Ascending aorta (tissue), 2 donors: ENCODE measurements at regions of chr1 and their contacts with region 1.

Region 1: DNA sequence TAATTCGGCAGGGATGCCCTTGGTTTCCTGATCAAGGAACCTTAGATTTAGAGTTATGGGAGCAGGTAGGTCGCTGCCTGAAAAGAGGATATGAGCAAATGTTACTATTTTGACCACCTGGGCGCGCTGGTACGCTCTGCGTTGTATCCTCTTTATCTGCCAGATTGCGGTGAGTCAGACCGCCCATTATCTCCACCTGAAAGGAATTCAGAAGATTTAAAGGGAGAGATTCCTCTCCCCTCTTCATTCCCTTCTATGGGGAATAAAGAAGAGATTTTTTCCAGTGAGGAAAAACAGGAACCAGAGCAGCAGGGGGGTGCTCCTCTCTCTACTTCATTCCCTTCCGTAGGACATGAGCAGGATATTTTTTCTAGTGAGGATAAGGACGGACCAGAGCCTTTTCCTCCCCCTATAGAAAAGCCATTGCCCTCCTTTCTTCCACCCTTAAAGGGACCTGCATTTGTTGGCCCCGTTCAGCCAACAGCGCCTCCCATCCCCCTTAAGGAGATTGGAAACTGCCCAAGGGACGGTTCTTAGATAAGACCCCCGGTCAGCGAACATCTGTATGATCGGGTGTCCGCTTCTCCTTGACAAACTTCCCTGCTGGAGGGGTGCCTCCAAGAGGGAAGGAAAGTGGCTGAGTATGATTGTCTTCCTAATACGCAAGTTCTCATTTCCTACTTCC is 34.1 kb downstream of the CLCA1 start:
- DNase-seq: no peak
- H3K4me3 ChIP-seq: peak overlapping the region; percentile 21 to 31
- H3K27ac ChIP-seq: no peak overlapping the region
- H3K4me1 ChIP-seq: no peaks in the 10 kb centered on the region
- H3K27me3 ChIP-seq: no peaks in the 10 kb centered on the region
- CTCF ChIP-seq: no peak

Region 2: DNA sequence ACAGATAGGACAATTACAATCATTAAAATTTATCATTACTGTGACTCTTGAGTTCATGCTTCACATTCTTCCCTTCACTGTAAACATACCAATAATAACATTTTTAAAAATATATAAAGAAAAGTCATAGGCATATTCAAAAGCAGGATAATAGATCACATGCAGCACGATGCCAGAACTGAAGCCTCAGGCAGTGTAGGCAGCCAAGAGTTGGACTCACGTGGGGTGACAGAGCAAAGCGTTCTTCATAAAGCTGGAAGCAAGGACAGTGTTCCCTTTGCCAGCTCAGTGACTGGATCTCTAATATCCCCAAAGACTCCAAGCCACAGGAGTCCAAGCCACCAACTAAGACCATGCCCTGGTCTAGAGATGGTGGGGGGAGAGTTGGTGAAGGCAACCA is 184.4 kb before region 1 on chr1:
- intact Hi-C with region 1: no loop called
- DNase-seq: no peak
- H3K4me3 ChIP-seq: no peak overlapping the region
- H3K27ac ChIP-seq: no peak overlapping the region
- H3K4me1 ChIP-seq: no peaks in the 10 kb centered on the region
- H3K27me3 ChIP-seq: no peaks in the 10 kb centered on the region
- CTCF ChIP-seq: no peak

Region 3: DNA sequence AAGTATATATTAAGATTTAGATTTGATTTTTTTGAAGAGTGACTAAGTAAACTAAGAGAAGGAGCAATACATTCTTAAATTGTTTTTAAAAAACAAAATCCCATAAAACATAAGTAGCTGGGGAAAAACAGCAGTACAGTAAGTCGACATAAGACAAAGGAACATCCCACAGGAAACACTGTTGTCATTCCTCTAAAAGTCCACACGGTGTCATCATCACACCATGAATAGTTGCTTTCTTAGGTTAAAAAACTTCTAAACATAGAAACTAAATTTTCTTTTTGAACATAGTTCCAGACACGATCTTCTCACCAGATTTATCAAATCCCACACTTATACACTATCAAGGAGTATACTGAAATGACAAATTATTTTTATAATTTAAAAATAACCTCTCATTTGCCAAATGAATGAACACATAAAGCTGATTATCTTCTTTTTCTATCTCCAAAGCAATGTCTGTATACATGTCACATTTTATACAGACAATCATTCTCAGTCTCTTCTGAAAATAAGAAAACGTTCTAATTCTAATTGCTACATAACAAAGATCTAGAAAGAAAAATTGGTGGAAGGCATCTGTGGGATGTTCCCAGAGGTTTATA is 122.5 kb before region 1 on chr1:
- intact Hi-C with region 1: loop called (anchors 2 kb)
- DNase-seq: no peak
- H3K4me3 ChIP-seq: no peak overlapping the region
- H3K27ac ChIP-seq: no peak overlapping the region
- H3K4me1 ChIP-seq: peaks cover 0 to 3% of the 10 kb centered on the region in 2 donors
- H3K27me3 ChIP-seq: no peaks in the 10 kb centered on the region
- CTCF ChIP-seq: peak; percentile 60 to 77 (median 66)

Region 4: DNA sequence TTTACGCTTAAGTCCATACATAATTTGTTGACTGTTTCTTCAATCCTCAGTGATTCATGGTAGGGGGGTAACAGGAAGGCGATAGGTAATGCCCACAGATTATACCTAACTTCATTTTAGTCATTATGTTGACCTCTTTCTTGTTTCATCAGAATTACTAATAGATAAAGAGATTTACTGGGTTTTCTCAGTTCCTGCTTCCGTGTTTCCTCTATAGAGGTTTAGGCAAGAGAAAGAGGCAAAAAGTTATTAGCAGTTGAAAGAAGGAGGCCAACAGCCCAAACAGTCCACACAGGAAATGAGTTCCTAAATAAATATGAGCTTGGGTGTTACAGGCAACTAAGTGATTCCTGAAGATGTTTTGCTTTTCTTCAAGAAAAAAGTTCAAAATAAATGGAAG is 52.0 kb before region 1 on chr1:
- intact Hi-C with region 1: no loop called
- DNase-seq: no peak
- H3K4me3 ChIP-seq: no peak overlapping the region
- H3K27ac ChIP-seq: no peak overlapping the region
- H3K4me1 ChIP-seq: no peaks in the 10 kb centered on the region
- H3K27me3 ChIP-seq: no peaks in the 10 kb centered on the region
- CTCF ChIP-seq: no peak

Region 5: GRCh38 chr1:86542626-86543025 is 39.8 kb after region 1 on chr1:
- intact Hi-C with region 1: no loop called
- DNase-seq: no peak
- H3K4me3 ChIP-seq: no peak overlapping the region
- H3K27ac ChIP-seq: no peak overlapping the region
- H3K4me1 ChIP-seq: no peaks in the 10 kb centered on the region
- H3K27me3 ChIP-seq: no peaks in the 10 kb centered on the region
- CTCF ChIP-seq: no peak